KBM-7 (cell line): ENCODE measurements at regions of chr12 and their contacts with region 1.

Region 1: GRCh38 chr12:11486623-11487444 is 91.5 kb upstream of the PRB2 start:
- DNase-seq: peak; percentile 79

Region 2: DNA sequence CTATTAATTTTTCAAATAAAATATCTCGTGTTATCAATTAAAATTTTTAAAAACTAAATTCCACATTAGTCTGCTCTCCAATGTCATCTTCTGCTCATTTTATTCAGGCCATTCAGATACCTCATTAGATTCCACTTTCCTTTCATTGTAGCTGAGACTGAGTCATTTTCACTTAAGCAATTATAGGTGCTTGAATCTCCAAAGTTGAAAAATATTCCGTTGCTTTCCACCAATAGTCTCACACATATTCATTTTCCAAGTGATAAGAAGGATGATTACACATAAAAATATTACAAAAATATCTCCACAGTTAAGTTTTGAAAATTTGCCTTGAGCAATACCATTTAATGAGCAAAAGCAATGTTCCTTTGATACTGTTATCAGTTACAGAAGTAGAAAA is 727.2 kb before region 1 on chr12:
- in situ Hi-C with region 1: loop called (anchors 10 kb)
- DNase-seq: no peak

Region 3: GRCh38 chr12:11228296-11228879 is 258.4 kb before region 1 on chr12:
- in situ Hi-C with region 1: loop called (anchors 25 kb)
- DNase-seq: peak; percentile 69

Region 4: GRCh38 chr12:11307143-11307542 is 179.7 kb before region 1 on chr12:
- in situ Hi-C with region 1: no loop called
- DNase-seq: no peak